ENCODE measurements at regions of chr22 and their contacts with region 1.

Region 1: DNA sequence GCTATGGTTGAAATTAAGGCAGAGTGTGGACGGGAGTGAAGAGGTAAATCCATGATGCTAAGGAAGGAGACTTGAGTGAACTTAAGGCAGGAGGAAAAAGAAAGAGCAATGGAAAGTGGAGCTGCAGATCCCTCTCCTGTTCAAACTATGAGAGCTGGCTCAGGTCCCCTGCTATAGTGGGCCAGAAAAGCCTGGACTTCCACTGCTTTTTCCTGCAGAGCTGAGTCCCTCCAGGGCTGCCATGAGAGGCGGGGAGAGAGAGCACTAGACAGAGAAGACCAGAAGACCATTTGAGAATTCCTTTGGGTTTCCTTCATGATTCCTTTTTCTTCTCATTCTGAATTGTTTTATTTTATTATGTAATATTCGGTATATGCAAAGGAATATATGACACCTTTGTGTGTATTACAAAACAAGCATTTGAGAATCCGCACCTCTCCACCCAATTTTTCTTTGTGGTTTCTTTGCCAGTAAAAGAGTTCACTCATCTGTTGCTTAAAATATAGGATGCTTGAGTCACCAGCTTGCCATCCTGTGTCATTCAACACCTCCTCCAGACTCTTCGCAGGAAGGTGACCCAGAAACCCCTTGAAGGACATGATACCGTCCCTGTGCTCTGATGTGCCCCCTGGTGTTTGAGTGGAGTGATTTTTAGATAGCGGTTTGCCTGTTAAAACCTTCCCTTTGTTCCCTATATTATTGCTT is 24.4 kb downstream of the SREBF2 start:
- DNase-seq: peak; percentile 75
- ATAC-seq: peak; percentile 25
- H3K4me3 ChIP-seq: no peak overlapping the region
- H3K4me3 Mint-ChIP-seq: peak overlapping the region; percentile 40
- H3K27ac ChIP-seq: peak overlapping the region; percentile 10 to 63
- H3K27ac Mint-ChIP-seq: peak overlapping the region; percentile 80
- H3K4me1 ChIP-seq: peaks cover 52 to 62% of the 10 kb centered on the region in 2 donors
- H3K4me1 Mint-ChIP-seq: peaks cover 67% of the 10 kb centered on the region
- H3K27me3 ChIP-seq: no peaks in the 10 kb centered on the region
- H3K27me3 Mint-ChIP-seq: no peaks in the 10 kb centered on the region
- CTCF ChIP-seq: peak; percentile 78

Region 2: DNA sequence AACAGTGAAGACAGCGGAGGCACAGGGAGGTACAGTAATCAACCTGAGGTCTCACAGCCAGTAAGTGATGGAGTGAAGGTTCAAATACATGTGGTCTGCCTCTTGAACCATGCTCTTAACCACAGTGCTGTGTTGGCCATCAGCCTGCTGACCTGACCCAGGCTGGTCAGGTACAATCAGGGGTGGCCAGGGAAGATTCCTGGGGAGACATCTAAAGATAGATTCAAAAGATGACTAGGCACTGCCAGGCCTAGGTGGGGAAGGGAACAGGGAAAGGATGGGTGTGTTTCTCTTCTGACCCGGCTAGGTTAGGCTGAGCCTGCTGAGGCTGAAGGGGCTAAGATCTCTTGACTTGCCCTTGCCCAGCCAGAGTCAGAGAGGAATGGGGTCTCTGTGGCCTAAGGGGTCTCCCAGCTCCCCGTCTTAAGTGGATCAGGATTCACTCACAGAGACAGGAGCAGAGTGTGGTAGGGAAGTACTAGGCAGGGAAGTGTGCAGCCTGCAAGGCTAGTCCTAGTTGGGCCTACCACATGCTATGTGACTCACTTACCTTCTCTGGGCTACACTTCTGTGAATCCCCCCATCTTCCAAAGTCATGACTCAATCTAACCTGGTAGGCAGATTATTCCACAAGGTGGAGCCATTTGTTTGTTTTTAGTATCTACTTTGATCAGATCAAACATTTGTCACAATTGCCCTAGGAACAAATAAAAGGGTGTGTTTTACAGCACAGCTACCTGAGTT is 34.8 kb before region 1 on chr22:
- CTCF ChIA-PET with region 1: interaction called, 10 read pairs
- POLR2A ChIA-PET with region 1: no interaction called
- intact Hi-C with region 1: loop called (anchors 1 kb)
- DNase-seq: peak; percentile 85
- ATAC-seq: peak; percentile 84
- H3K4me3 ChIP-seq: no peak overlapping the region
- H3K4me3 Mint-ChIP-seq: no peak overlapping the region
- H3K27ac ChIP-seq: no peak overlapping the region
- H3K27ac Mint-ChIP-seq: peak overlapping the region; percentile 57
- H3K4me1 ChIP-seq: no peaks in the 10 kb centered on the region
- H3K4me1 Mint-ChIP-seq: peaks cover 7% of the 10 kb centered on the region
- H3K27me3 ChIP-seq: no peaks in the 10 kb centered on the region
- H3K27me3 Mint-ChIP-seq: no peaks in the 10 kb centered on the region
- CTCF ChIP-seq: peak; percentile 74

Region 3: GRCh38 chr22:41873391-41873790 is 16.1 kb after region 1 on chr22:
- CTCF ChIA-PET with region 1: interaction called, 6 read pairs
- POLR2A ChIA-PET with region 1: interaction called, 17 read pairs
- intact Hi-C with region 1: no loop called
- DNase-seq: no peak
- ATAC-seq: no peak
- H3K4me3 ChIP-seq: no peak overlapping the region
- H3K4me3 Mint-ChIP-seq: peak overlapping the region; percentile 8
- H3K27ac ChIP-seq: peak overlapping the region; percentile 8 to 31
- H3K27ac Mint-ChIP-seq: peak overlapping the region; percentile 79
- H3K4me1 ChIP-seq: peaks cover 5 to 18% of the 10 kb centered on the region in 2 donors
- H3K4me1 Mint-ChIP-seq: peaks cover 18% of the 10 kb centered on the region
- H3K27me3 ChIP-seq: no peaks in the 10 kb centered on the region
- H3K27me3 Mint-ChIP-seq: no peaks in the 10 kb centered on the region
- CTCF ChIP-seq: no peak

Region 4: GRCh38 chr22:41888627-41889200 is 31.4 kb after region 1 on chr22:
- CTCF ChIA-PET with region 1: interaction called, 13 read pairs
- POLR2A ChIA-PET with region 1: interaction called, 4 read pairs
- intact Hi-C with region 1: loop called (anchors 2 kb)
- DNase-seq: no peak
- ATAC-seq: peak; percentile 12
- H3K4me3 ChIP-seq: peak overlapping the region in 1 of 5 experiments; percentile 2
- H3K4me3 Mint-ChIP-seq: peak overlapping the region; percentile 56
- H3K27ac ChIP-seq: peak overlapping the region; percentile 56 to 71
- H3K27ac Mint-ChIP-seq: peak overlapping the region; percentile 90
- H3K4me1 ChIP-seq: peaks cover 21 to 35% of the 10 kb centered on the region in 2 donors
- H3K4me1 Mint-ChIP-seq: peaks cover 62% of the 10 kb centered on the region
- H3K27me3 ChIP-seq: no peaks in the 10 kb centered on the region
- H3K27me3 Mint-ChIP-seq: no peaks in the 10 kb centered on the region
- CTCF ChIP-seq: no peak

Region 5: DNA sequence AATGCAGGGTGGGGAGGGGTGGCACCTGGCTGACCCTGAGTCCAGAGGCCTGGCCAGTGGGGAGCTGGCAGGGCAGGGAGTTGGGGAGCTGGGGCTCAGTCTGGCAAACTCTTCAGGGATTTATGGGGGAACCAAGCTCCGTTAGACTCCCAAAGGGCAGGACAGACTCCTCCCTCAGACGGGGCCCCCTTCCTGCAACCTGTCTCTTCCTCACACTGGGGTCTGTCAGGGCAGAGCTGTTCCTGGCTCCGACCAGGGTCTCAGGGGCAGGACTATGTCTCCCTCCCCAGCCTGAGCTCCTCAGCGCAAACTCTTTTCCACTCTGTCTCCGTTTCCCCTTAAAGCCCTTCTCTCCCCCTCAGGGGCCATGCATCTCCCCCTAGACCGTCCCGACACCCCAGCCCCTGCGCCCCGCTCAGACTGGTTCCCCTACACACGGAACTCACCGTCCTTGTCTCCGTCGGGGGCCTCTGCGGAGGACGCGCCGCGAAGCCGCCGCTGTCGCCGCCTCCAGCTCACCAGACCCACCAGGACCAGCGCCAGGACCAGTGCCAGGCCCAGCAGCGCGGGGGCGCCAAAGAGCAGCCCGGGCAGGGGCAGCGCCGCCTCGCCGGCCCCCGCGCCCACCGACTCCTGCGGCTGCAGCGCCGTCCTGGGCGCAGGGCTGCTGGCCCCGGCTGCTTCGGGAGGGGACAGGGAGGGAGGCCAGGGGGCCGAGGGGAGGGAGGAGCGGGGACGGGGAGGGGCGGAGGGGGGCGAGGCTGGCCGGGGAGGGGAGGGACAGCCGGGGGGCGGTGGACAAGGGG is 68.6 kb after region 1 on chr22:
- CTCF ChIA-PET with region 1: interaction called, 10 read pairs
- POLR2A ChIA-PET with region 1: interaction called, 15 read pairs
- intact Hi-C with region 1: no loop called
- DNase-seq: peak; percentile 88
- ATAC-seq: peak; percentile 46
- H3K4me3 ChIP-seq: peak overlapping the region; percentile 59 to 96 (median 88)
- H3K4me3 Mint-ChIP-seq: peak overlapping the region; percentile 100
- H3K27ac ChIP-seq: peak overlapping the region; percentile 94 to 95
- H3K27ac Mint-ChIP-seq: peak overlapping the region; percentile 99
- H3K4me1 ChIP-seq: peaks cover 70 to 86% of the 10 kb centered on the region in 2 donors
- H3K4me1 Mint-ChIP-seq: peaks cover 67% of the 10 kb centered on the region
- H3K27me3 ChIP-seq: no peaks in the 10 kb centered on the region
- H3K27me3 Mint-ChIP-seq: no peaks in the 10 kb centered on the region
- CTCF ChIP-seq: peak; percentile 83

Measured in B cell (primary cell).